Activated CD4-positive, alpha-beta T cell treated with anti-CD3 and anti-CD28 coated beads for 36 hours (primary cell): ENCODE measurements at regions of chr15 and their contacts with region 1.

Region 1: DNA sequence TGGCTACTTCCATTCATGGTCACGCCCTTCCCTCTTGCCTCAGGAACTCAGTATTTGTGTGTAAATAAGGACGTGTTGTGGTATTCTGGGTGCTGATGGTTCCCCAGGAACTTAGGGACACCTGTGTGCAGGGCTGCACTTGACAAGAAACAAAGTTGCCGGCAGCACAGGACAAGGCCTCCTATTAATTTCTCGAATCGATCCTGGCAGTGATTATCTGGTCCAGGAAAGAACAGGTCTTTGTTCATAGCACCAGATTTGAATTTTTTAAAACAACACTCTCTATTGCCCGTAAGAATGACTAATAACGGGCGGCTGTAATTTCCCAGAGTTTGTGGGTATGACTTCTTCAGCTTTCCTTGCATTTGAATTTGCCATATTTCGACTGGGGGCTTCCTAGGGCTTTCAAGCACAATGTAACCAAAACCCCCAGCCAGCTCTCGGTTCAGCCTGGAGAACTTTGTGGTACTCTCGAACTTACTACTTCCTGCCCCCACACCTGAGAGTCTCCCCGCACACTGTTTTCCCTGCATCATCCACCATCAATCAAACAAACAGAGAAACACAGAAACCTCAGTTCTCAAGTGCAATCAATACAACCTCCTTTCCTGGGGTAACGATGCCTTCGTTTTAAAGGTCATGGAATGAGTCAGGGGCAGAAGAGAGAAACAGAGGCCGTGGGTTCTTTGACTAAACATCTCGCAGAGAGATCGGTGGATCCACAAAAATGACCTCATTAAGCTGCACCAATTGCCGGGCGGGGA is 241.7 kb upstream of the ICE2 start:
- DNase-seq: peak; percentile 84
- ATAC-seq: peak; percentile 86
- H3K4me3 Mint-ChIP-seq: peak overlapping the region; percentile 43
- H3K27ac Mint-ChIP-seq: peak overlapping the region; percentile 95
- H3K4me1 Mint-ChIP-seq: peaks cover 61% of the 10 kb centered on the region
- H3K27me3 Mint-ChIP-seq: no peaks in the 10 kb centered on the region

Region 2: DNA sequence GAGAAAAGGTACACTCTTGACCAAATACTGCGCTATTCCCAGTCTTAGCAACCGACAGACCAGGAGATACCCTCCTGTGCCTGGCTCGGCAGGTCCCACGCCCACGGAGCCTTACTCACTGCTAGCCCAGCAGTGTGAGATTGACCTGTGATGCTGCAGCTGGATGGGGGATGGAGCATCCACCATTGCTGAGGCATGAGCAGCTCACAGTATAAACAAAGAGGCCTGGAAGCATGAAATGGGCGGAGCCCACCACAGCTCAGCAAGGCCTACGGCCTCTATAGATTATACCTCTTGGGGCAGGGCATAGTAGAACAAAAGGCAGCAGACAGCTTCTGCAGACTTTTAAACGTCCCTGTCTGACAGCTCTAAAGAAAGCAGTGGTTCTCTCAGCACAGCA is 483.3 kb before region 1 on chr15:
- CTCF ChIA-PET with region 1: no interaction called
- POLR2A ChIA-PET with region 1: no interaction called
- intact Hi-C with region 1: no loop called
- DNase-seq: no peak
- ATAC-seq: no peak
- H3K4me3 Mint-ChIP-seq: no peak overlapping the region
- H3K27ac Mint-ChIP-seq: no peak overlapping the region
- H3K4me1 Mint-ChIP-seq: peaks cover 3% of the 10 kb centered on the region
- H3K27me3 Mint-ChIP-seq: peaks cover 46% of the 10 kb centered on the region

Region 3: GRCh38 chr15:60397772-60398445 is 322.8 kb before region 1 on chr15 and contains the start of gene ANXA2:
- CTCF ChIA-PET with region 1: no interaction called
- POLR2A ChIA-PET with region 1: no interaction called
- intact Hi-C with region 1: loop called in 1 of 2 experiments (anchors 2 kb)
- DNase-seq: peak; percentile 91
- ATAC-seq: peak; percentile 74
- H3K4me3 Mint-ChIP-seq: peak within 1 kb of the TSS; percentile 83
- H3K27ac Mint-ChIP-seq: peak within 1 kb of the TSS; percentile 89
- H3K4me1 Mint-ChIP-seq: peaks cover 36% of the 10 kb centered on the region
- H3K27me3 Mint-ChIP-seq: peaks cover 4% of the 10 kb centered on the region
- total RNA-seq, gene ANXA2: 65.9 to 80.2 TPM

Region 4: DNA sequence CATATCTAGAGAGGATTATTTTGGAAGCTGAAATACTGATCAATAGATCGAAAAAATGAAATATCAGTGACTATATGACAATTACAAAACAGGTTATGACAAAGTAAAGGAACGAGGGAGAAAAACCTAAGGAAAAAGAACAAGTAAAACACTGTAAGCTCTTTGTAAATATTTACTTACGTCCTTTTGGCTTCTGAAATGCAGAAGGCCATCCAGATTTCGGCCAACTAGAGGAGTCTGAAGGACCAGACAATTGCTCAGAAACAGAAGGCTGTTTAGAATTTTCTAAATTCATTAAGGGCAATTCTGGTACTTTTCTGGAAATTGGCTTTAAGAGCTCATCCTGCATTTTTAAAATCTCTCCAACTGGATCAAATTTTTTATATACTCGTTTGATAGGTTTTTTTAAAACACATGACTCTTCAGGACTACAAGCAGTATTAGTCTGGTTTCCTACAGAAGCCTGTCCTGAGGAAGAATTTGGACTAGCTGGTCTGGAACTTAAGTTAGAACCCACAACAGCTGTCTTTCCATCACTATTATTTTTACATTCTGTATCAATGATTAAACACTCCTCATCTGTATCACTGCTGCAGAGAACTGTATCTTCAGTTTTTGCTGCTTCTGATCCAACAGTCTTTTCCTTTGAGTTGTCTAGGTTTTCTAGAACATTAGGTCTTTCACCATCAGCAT is 271.9 kb before region 1 on chr15:
- CTCF ChIA-PET with region 1: no interaction called
- POLR2A ChIA-PET with region 1: no interaction called
- intact Hi-C with region 1: no loop called
- DNase-seq: no peak
- ATAC-seq: no peak
- H3K4me3 Mint-ChIP-seq: no peak overlapping the region
- H3K27ac Mint-ChIP-seq: no peak overlapping the region
- H3K4me1 Mint-ChIP-seq: no peaks in the 10 kb centered on the region
- H3K27me3 Mint-ChIP-seq: no peaks in the 10 kb centered on the region

Region 5: DNA sequence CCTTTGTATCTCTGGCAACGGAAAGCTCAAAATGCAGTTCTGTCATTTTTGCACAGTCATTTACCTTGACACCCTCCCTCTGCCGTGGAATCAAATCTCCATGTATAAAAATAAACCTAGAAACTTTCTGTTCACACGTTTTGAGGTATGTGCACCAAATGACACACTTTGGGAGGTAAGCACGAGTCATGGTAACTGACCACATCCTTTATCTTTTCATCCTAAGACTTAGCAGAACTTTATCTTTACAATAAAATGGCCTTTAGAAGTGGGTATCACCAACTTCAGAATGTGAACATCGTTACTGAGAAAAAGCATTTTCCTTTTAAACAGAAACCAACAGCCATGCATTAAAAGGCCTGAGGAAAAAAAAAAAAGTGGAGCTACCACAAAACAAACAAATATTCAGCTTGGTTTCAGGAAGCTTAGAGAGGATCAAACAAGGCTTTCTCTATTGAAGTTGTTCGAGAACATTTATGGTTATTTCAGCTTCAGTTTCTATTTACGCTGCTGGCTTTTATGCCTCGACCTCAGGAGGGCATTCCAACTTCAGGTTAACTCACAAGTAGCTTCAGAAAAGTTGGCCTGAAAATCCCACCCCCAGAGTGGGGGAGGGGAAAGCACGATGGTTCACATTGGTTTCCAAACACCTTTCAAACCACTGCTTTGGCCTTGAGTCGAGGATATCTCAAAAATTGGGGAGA is 70.7 kb before region 1 on chr15:
- CTCF ChIA-PET with region 1: interaction called, 6 read pairs
- POLR2A ChIA-PET with region 1: interaction called, 8 read pairs
- intact Hi-C with region 1: loop called (anchors 1 kb)
- DNase-seq: peak; percentile 68
- ATAC-seq: peak; percentile 89
- H3K4me3 Mint-ChIP-seq: peak overlapping the region; percentile 27
- H3K27ac Mint-ChIP-seq: peak overlapping the region; percentile 82
- H3K4me1 Mint-ChIP-seq: peaks cover 47% of the 10 kb centered on the region
- H3K27me3 Mint-ChIP-seq: no peaks in the 10 kb centered on the region

Region 6: DNA sequence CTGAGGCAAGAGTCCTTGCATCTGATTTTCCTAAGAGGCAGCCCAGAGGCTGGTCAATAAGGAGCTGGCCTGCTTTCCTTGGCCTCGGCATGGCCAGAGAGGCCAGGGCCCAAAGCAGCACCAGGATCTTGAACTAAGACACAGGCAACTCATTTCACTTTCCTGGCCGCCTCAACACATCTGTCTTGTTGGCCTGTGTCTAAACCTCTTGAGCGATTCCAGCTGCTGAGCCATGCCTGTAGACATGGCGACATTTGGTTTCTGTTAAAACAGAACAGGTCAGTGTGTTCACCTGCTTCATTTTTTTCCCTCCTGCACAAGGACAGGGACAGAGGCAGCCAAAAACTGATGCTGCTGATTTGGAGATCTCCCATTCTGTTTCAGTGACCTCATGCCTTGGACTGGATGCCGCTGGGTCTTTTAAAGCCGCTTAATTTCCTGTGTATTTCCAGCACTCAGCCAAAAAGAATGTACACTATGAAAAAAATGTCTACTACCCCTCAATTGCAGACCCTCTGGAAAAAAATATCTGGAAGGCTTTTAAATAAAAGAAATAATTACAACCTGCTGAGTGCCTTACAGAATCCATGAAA is 24.9 kb after region 1 on chr15:
- CTCF ChIA-PET with region 1: no interaction called
- POLR2A ChIA-PET with region 1: no interaction called
- intact Hi-C with region 1: no loop called
- DNase-seq: no peak
- ATAC-seq: no peak
- H3K4me3 Mint-ChIP-seq: no peak overlapping the region
- H3K27ac Mint-ChIP-seq: no peak overlapping the region
- H3K4me1 Mint-ChIP-seq: peaks cover 4% of the 10 kb centered on the region
- H3K27me3 Mint-ChIP-seq: no peaks in the 10 kb centered on the region

Region 7: DNA sequence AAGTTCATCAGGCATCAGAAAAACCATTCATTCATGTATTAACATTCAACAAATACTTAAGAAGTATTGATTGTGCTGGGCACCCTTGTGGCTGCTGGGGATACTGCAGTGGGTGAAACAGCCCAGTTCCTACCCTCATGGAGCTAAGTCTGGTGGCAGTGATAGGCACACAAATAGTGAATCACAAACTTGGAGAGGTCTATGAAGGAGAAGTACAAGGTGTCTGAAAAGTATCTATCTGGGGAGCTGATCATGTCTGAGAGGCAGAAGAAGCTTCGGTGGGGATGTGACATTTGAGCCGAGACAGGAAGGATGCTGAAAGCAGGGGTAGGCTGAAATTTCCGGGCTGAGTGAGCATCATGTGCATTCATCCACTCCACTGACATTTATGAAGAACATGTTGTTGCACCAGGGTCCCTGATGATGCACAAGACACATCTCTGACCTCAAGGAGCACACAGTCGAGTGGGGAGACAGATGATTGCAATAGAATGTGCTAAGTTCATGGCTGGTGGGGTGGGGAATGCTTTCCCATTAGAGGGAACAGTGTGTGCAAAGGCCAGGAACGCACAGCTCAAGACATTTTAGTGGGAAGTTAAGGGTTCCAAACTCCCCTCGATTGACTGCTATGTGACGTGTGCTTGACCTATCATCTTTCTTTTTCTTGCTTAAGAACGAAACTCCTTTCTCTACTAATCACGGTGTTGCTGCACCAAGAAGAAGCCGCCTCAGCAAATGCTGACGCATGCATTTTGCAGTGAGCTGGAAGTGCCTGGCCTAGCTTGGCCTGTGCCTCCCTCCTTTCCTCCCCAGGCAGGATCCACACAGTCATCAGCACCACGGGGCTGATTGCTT is 67.4 kb after region 1 on chr15:
- CTCF ChIA-PET with region 1: interaction called, 8 read pairs
- POLR2A ChIA-PET with region 1: no interaction called
- intact Hi-C with region 1: loop called in 1 of 2 experiments (anchors 2 kb)
- DNase-seq: peak; percentile 70
- ATAC-seq: peak; percentile 81
- H3K4me3 Mint-ChIP-seq: peak overlapping the region; percentile 5
- H3K27ac Mint-ChIP-seq: peak overlapping the region; percentile 52
- H3K4me1 Mint-ChIP-seq: peaks cover 59% of the 10 kb centered on the region
- H3K27me3 Mint-ChIP-seq: no peaks in the 10 kb centered on the region

Region 8: DNA sequence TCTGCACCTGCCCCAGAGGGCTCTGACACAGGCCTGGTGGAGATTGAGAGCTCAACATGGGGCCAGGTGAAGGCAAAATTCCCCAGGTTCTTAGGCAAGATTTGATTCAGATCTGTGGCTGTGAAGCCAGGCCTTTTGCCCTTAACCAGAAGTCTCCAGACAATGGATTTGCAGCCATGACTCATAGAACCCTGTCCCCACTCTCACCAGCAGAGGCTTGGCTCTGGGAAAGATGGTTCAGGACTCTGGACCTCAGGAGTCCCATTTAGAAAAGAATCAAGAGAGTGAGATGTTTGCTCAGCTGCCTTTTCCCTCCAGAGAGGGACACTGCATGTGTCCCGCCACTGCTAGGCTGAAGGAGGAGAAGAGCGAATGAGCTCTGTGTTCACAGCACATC is 119.6 kb after region 1 on chr15:
- CTCF ChIA-PET with region 1: interaction called, 3 read pairs
- POLR2A ChIA-PET with region 1: interaction called, 6 read pairs
- intact Hi-C with region 1: loop called (anchors 1 to 2 kb)
- DNase-seq: peak; percentile 34
- ATAC-seq: peak; percentile 5
- H3K4me3 Mint-ChIP-seq: peak overlapping the region; percentile 60
- H3K27ac Mint-ChIP-seq: peak overlapping the region; percentile 62
- H3K4me1 Mint-ChIP-seq: peaks cover 77% of the 10 kb centered on the region
- H3K27me3 Mint-ChIP-seq: peaks cover 2% of the 10 kb centered on the region